Right cardiac atrium (tissue), 5 donors: ENCODE measurements at regions of chr18 and their contacts with region 1.

Region 1: GRCh38 chr18:32439802-32440201 is 30.9 kb downstream of the GAREM1 start:
- DNase-seq: no peak
- ATAC-seq: no peak
- H3K4me3 ChIP-seq: no peak overlapping the region
- H3K27ac ChIP-seq: no peak overlapping the region
- H3K4me1 ChIP-seq: peaks cover 3% of the 10 kb centered on the region
- H3K27me3 ChIP-seq: no peaks in the 10 kb centered on the region

Region 2: GRCh38 chr18:32091724-32092421 is 347.9 kb before region 1 on chr18 and contains the start of gene RNF138:
- intact Hi-C with region 1: no loop called
- DNase-seq: peak; percentile 90 to 95 (median 94)
- ATAC-seq: peak; percentile 79 to 85
- H3K4me3 ChIP-seq: peak within 1 kb of the TSS; percentile 94
- H3K27ac ChIP-seq: peak within 1 kb of the TSS; percentile 100
- H3K4me1 ChIP-seq: no peaks in the 10 kb centered on the region
- H3K27me3 ChIP-seq: no peaks in the 10 kb centered on the region
- total RNA-seq, gene RNF138: 12.7 to 15.7 (median 13.3) TPM

Region 3: GRCh38 chr18:32333781-32334180 is 106.0 kb before region 1 on chr18:
- intact Hi-C with region 1: no loop called
- DNase-seq: no peak
- ATAC-seq: peak; percentile 60 to 75
- H3K4me3 ChIP-seq: no peak overlapping the region
- H3K27ac ChIP-seq: no peak overlapping the region
- H3K4me1 ChIP-seq: no peaks in the 10 kb centered on the region
- H3K27me3 ChIP-seq: no peaks in the 10 kb centered on the region

Region 4: GRCh38 chr18:32383050-32383819 is 56.6 kb before region 1 on chr18:
- intact Hi-C with region 1: loop called in 1 of 4 experiments (anchors 10 kb)
- DNase-seq: no peak
- ATAC-seq: peak; percentile 84 to 86
- H3K4me3 ChIP-seq: no peak overlapping the region
- H3K27ac ChIP-seq: no peak overlapping the region
- H3K4me1 ChIP-seq: no peaks in the 10 kb centered on the region
- H3K27me3 ChIP-seq: no peaks in the 10 kb centered on the region

Region 5: GRCh38 chr18:32530947-32531651 is 91.3 kb after region 1 on chr18:
- intact Hi-C with region 1: no loop called
- DNase-seq: no peak
- ATAC-seq: no peak
- H3K4me3 ChIP-seq: no peak overlapping the region
- H3K27ac ChIP-seq: no peak overlapping the region
- H3K4me1 ChIP-seq: no peaks in the 10 kb centered on the region
- H3K27me3 ChIP-seq: no peaks in the 10 kb centered on the region

Region 6: GRCh38 chr18:32542221-32542798 is 102.5 kb after region 1 on chr18:
- intact Hi-C with region 1: no loop called
- DNase-seq: no peak
- ATAC-seq: no peak
- H3K4me3 ChIP-seq: no peak overlapping the region
- H3K27ac ChIP-seq: no peak overlapping the region
- H3K4me1 ChIP-seq: no peaks in the 10 kb centered on the region
- H3K27me3 ChIP-seq: no peaks in the 10 kb centered on the region